ENCODE measurements at regions of chr6 and their contacts with region 1.

Region 1: DNA sequence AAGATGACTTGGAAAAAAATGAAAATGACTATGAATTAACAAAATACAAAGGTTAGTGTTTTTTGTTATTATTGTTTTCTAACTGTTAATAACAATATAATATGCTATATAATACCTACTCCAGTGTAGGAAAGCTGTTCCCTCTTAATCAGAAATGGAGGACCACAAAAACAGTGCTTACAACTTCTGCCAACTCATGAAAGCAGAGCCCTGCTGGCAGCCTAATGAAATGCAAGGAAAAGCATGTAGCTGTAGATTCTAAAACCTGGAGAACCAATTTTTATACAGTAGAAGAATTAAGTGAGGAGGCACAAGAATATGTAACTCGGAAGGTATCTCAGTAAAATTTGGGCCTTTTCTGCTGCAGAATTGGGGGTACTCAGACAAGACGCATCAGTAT is 29.4 kb downstream of the PHIP start:
- DNase-seq: peak; percentile 4
- ATAC-seq: peak; percentile 75; the same call in 1 of the 2 replicates
- H3K4me3 ChIP-seq: no peak overlapping the region
- H3K27ac ChIP-seq: no peak overlapping the region
- H3K4me1 ChIP-seq: no peaks in the 10 kb centered on the region
- H3K27me3 ChIP-seq: no peaks in the 10 kb centered on the region
- CTCF ChIP-seq: peak; percentile 60; the same call in 1 of the 2 replicates

Region 2: DNA sequence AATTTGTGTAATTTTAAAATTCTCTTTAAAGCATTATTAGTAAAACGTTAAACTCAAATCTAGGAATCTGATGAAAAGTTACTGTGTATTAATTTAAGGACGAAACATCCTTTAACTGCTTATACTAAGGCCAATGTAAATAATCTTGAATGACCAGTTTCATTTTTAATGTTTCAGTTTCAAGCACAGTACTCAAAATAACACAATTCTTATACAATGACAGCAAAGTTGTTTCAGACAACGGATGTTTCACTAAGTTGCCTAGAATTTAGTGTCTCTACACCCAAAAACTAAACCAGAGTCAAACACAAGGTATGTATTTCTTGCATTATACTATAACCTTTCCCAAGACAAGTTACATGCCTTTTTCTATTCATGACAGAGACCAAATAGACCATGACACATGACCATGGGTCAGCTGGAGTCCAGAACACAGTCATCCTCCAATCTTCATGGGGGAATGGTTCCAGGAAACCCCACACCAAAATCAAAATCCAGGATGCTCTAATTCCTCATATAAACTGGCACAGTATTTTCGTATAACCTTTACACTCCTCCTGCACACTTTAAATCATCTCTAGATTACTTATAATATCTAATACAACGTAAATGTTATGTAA is 21.7 kb after region 1 on chr6:
- CTCF ChIA-PET with region 1: no interaction called
- POLR2A ChIA-PET with region 1: interaction called, 10 read pairs
- in situ Hi-C with region 1: no loop called
- intact Hi-C with region 1: no loop called
- DNase-seq: no peak
- ATAC-seq: no peak
- H3K4me3 ChIP-seq: no peak overlapping the region
- H3K27ac ChIP-seq: no peak overlapping the region
- H3K4me1 ChIP-seq: peaks cover 16% of the 10 kb centered on the region; the same call in 1 of the 2 replicates
- H3K27me3 ChIP-seq: no peaks in the 10 kb centered on the region
- CTCF ChIP-seq: no peak

Region 3: DNA sequence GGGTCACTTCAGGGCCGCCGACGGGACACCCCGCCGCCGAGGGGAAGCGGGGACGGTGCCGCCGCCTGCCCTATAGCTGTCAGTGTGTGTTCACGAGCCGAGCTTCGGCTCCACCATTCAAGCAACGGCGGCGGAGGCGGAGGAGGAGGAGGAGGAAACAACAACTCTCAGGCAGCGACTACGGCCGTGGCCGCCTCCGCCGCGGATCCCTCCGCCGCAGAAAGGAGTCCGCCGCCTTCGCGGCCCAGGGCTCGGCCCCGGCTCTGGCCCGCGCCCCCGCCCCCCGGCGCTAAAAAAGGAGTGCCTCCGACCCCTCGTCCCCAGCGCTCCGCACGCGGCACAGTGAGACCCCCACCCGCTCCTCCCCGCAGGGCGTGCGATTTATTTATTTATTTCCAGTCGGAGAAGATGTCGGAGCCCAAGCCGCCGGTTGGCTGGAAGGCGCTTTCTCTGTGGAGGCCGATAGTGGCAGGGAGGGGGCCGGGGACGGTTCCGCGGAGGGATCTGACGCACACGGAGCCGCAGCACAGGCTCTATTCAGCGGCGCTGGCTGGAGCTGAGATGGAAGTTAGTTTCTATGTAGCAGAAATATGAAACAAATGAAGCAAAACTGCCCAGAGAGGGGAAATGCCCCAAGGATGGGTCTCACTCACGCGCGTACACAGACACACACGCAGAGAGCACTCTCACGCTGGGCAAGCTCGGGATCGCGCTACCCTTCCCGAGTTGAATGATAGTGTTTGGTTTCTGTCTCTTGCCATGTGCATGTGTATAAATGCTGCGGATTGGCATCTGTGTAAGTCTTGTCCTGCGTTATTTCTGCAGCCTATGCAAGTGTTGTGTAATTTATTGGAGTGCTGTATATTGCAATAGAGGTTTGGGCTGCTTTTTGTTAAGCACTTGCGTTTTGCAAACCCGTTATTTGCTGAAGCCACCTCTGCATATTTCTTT is 29.7 kb after region 1 on chr6 and contains the start of gene PHIP:
- CTCF ChIA-PET with region 1: interaction called, 10 read pairs
- POLR2A ChIA-PET with region 1: no interaction called
- in situ Hi-C with region 1: no loop called
- intact Hi-C with region 1: no loop called
- DNase-seq: peak; percentile 73
- ATAC-seq: peak; percentile 92
- H3K4me3 ChIP-seq: peak within 1 kb of the TSS; percentile 84 to 87
- H3K27ac ChIP-seq: peak within 1 kb of the TSS; percentile 98
- H3K4me1 ChIP-seq: peaks cover 29% of the 10 kb centered on the region
- H3K27me3 ChIP-seq: no peaks in the 10 kb centered on the region
- CTCF ChIP-seq: no peak
- total RNA-seq, gene PHIP: 28.0 TPM

Region 4: DNA sequence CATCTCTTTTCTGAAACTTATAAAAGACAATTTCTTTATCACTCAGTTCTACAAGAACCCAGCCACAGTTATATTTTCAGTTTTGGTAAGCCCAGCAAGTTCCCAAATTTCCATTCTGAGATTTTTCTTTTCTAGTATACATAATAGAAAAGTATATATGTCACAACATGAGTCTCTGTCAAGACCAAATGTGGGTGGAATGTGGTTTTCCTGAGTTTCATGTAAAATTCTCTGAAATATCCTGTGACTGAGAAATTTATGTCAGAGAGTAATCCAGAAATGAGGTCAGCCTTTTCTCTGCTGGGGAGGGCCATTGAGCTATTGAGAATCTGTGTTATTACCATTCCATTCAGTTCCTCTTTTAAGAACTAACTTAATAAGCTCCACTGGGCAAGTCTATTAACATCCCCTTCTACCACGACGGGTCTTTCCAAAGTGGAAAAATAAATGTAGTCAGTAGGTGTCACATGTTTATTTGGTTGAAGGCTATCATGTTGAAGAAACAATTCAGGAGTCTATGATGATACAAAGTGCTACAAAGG is 286.6 kb after region 1 on chr6:
- CTCF ChIA-PET with region 1: no interaction called
- POLR2A ChIA-PET with region 1: no interaction called
- in situ Hi-C with region 1: no loop called
- intact Hi-C with region 1: no loop called
- DNase-seq: no peak
- ATAC-seq: no peak
- H3K4me3 ChIP-seq: no peak overlapping the region
- H3K27ac ChIP-seq: no peak overlapping the region
- H3K4me1 ChIP-seq: no peaks in the 10 kb centered on the region
- H3K27me3 ChIP-seq: no peaks in the 10 kb centered on the region
- CTCF ChIP-seq: no peak

Measured in Panc1 (cell line).